CD4-positive, alpha-beta T cell (primary cell): ENCODE measurements at regions of chr17 and their contacts with region 1.

Region 1: DNA sequence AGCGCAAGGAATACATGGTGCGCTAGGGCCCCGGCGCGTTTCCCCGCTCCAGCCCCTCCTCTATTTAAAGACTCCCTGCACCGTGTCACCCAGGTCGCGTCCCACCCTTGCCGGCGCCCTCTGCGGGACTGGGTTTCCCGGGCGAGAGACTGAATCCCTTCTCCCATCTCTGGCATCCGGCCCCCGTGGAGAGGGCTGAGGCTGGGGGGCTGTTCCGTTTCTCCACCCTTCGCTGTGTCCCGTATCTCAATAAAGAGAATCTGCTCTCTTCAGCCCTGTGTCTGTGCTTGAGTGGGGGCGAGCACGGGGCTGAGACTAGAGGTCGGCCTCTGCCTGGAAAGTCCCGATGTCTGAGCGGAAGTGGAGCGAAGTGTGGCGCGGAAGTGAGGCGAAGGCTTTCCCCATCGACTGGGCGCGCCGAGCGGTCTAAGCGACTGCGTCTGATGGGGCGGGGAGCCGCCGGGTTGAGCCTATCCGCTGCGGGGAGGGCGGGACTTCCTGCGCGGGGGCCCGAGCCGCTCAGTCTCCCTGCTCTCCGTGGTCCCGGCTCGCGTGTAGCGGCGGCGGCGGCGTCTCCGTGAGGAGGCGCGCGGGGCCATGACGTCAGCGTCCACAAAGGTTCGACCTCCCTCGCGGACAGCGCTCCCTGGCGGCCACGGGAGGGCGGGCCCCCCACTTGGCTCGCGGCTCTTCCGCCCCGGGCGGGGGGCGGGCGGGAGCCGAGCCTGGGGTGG is 2.0 kb downstream of the RNASEK start:
- DNase-seq: peak; percentile 95 to 100 (median 97)
- ATAC-seq: peak; percentile 76
- H3K4me3 ChIP-seq: peak overlapping the region; percentile 99
- H3K4me3 Mint-ChIP-seq: peak overlapping the region; percentile 99
- H3K27ac ChIP-seq: peak overlapping the region; percentile 98 to 99
- H3K27ac Mint-ChIP-seq: peak overlapping the region; percentile 98
- H3K4me1 ChIP-seq: peaks cover 78% of the 10 kb centered on the region
- H3K4me1 Mint-ChIP-seq: peaks cover 68% of the 10 kb centered on the region
- H3K27me3 ChIP-seq: no peaks in the 10 kb centered on the region
- H3K27me3 Mint-ChIP-seq: no peaks in the 10 kb centered on the region
- CTCF ChIP-seq: peak; percentile 70

Region 2: DNA sequence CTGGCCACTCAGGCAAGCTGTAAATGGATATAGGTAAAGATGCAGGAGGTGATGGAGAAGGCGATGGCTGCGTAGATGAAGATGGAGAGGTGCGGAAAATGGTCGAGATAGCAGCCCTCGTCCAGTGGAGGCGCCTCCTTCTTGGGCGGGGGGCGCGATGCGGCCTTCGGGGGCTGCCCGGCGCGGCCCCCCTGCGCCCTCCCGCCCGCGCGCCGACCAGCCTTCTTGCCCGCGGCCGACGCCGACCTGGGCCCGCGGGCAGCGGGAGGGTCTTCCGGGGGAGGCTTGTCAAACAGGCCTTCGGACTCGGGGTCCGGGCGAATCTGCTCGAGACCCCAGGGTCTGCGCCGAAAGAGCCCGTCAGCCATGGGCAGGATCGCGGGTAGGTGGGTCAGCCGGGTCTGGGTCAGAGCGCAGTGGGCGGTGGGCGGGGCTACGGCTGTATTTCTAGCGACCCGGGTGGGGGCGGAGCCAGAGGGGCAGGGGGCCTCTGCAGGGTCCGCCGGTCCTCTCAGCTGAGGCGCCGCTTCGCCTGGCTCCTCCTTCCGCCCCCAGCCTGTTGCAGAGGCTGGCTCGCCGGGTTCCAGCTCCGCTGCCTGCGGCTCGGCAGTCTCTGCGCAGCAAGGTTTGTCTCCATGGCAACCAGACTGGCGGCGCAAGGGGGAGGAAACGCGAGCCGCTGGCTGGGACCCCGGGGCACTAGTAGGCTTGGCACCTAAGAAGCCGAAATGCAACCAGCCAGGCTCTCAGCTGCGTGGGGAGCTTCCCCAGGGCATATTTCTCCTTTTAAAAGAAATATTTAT is 1513.6 kb before region 1 on chr17:
- CTCF ChIA-PET with region 1: no interaction called
- POLR2A ChIA-PET with region 1: no interaction called
- intact Hi-C with region 1: loop called in 1 of 2 experiments (anchors 10 kb)
- DNase-seq: peak; percentile 60 to 91 (median 74)
- ATAC-seq: peak; percentile 95
- H3K4me3 ChIP-seq: peak overlapping the region; percentile 64
- H3K4me3 Mint-ChIP-seq: peak overlapping the region; percentile 93
- H3K27ac ChIP-seq: peak overlapping the region in 1 of 2 donors; percentile 14
- H3K27ac Mint-ChIP-seq: peak overlapping the region; percentile 83
- H3K4me1 ChIP-seq: peaks cover 17% of the 10 kb centered on the region
- H3K4me1 Mint-ChIP-seq: peaks cover 21% of the 10 kb centered on the region
- H3K27me3 ChIP-seq: no peaks in the 10 kb centered on the region
- H3K27me3 Mint-ChIP-seq: no peaks in the 10 kb centered on the region
- CTCF ChIP-seq: no peak

Region 3: DNA sequence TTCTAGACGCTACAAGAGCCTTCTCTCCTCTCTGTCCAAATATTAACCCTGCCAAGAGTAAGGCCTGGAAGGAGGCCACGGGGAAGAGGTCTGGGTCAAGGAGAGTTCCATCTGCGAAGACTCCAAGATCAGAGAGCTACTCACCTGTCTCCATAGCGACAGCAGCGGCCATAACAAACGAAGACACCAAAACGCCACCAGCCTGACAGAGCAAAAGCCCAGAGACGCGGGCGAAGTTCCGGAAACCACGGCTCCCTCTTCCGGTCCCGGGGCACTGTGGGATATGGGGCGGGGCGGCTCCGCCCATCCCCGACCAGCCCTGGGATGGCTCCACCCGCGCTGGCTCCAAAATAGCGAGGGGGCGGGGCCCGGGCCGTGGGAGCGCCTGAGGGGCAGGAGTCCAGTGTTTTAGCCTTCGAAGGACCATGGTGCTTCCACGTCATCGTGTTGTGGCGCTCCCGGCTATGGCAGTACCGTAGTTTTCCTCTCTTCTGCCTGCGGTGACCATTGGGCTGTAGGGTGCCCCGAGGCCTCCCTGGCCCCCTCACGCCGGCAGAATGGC is 363.0 kb before region 1 on chr17 and contains the starts of genes C17orf100 and MED31:
- CTCF ChIA-PET with region 1: no interaction called
- POLR2A ChIA-PET with region 1: no interaction called
- intact Hi-C with region 1: loop called (anchors 5 kb)
- DNase-seq: peak; percentile 87 to 98 (median 94)
- ATAC-seq: peak; percentile 81
- H3K4me3 ChIP-seq: peak within 1 kb of the TSS; percentile 64
- H3K4me3 Mint-ChIP-seq: peak within 1 kb of the TSS; percentile 99
- H3K27ac ChIP-seq: peak within 1 kb of the TSS; percentile 98
- H3K27ac Mint-ChIP-seq: peak within 1 kb of the TSS; percentile 99
- H3K4me1 ChIP-seq: peaks cover 35% of the 10 kb centered on the region
- H3K4me1 Mint-ChIP-seq: peaks cover 73% of the 10 kb centered on the region
- H3K27me3 ChIP-seq: peaks cover 0 to 4% of the 10 kb centered on the region in 2 experiments
- H3K27me3 Mint-ChIP-seq: no peaks in the 10 kb centered on the region
- CTCF ChIP-seq: no peak
- total RNA-seq, gene C17orf100: 0.69 to 0.70 TPM
- total RNA-seq, gene MED31: 31.4 to 32.0 TPM

Region 4: DNA sequence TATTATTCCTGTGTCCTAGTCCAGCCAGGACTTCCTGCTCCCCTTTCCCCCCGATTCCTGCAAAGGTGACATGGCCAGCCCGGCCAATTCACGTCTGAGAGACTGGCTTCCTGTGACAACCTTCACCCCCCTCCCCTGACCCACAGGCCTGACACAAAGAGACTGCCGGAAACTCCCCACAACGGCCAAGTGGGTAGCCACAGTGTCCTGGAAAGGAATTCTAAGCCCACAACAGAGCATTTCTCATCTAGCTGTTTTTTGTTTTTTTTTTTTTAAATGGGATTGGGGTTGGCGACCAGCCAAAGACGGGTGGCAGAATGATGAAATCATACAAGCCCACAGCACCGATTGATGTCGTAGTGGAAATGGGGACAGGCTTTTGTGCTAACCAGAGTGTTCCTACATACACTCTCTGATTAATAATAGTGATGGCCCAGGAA is 261.4 kb before region 1 on chr17:
- CTCF ChIA-PET with region 1: no interaction called
- POLR2A ChIA-PET with region 1: no interaction called
- intact Hi-C with region 1: loop called in 1 of 2 experiments (anchors 10 kb)
- DNase-seq: peak in 10 of 14 experiments; percentile 11 to 85 (median 52)
- ATAC-seq: peak; percentile 49
- H3K4me3 ChIP-seq: no peak overlapping the region
- H3K4me3 Mint-ChIP-seq: peak overlapping the region; percentile 47
- H3K27ac ChIP-seq: peak overlapping the region in 1 of 2 donors; percentile 64
- H3K27ac Mint-ChIP-seq: peak overlapping the region; percentile 80
- H3K4me1 ChIP-seq: peaks cover 52% of the 10 kb centered on the region
- H3K4me1 Mint-ChIP-seq: peaks cover 53% of the 10 kb centered on the region
- H3K27me3 ChIP-seq: no peaks in the 10 kb centered on the region
- H3K27me3 Mint-ChIP-seq: no peaks in the 10 kb centered on the region
- CTCF ChIP-seq: no peak

Region 5: DNA sequence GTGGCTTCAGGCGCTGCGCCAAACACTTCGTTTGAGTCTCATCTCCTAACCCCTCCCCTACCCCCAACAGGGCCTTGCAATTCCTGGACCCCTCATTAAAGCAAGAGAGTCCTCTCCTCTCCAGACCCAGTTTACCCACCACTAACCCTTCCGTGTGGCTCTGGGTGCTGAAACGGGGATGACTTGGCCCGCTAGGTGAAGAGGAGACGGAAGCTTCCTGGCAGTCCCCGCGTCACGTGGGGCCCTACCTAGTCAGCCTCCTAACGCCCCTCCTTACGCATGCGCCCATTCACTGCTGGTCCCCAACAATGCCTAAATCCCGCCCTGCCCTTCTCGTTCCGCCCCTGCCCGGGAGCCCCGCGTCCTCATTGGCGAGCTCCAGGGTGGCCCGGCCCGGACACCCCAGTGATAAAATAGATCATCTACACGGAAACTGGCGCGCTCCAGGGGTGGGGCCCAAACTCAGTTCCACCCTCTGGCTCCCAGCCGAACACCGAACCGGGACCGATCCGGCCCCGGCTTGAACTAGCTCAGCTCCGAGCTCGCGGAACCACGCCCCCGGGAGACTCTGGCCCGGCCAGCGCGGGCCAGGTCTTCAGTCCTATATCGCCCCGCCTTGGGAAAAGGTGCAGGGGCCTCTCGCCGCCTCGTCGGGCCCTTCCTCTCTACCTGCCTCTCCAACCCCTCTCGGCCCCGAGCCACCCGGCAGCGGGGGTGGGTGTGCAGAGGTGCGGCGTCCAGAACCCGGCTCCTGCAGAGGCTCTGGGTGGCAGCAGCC is 21.4 kb after region 1 on chr17 and contains the start of gene SLC16A13:
- CTCF ChIA-PET with region 1: interaction called, 3 read pairs
- POLR2A ChIA-PET with region 1: interaction called, 35 read pairs
- intact Hi-C with region 1: loop called in 1 of 2 experiments (anchors 2 kb)
- DNase-seq: peak; percentile 94 to 100 (median 98)
- ATAC-seq: peak; percentile 90
- H3K4me3 ChIP-seq: peak within 1 kb of the TSS; percentile 99
- H3K4me3 Mint-ChIP-seq: peak within 1 kb of the TSS; percentile 91
- H3K27ac ChIP-seq: peak within 1 kb of the TSS; percentile 84 to 93
- H3K27ac Mint-ChIP-seq: peak within 1 kb of the TSS; percentile 99
- H3K4me1 ChIP-seq: peaks cover 57% of the 10 kb centered on the region
- H3K4me1 Mint-ChIP-seq: peaks cover 63% of the 10 kb centered on the region
- H3K27me3 ChIP-seq: no peaks in the 10 kb centered on the region
- H3K27me3 Mint-ChIP-seq: no peaks in the 10 kb centered on the region
- CTCF ChIP-seq: no peak
- total RNA-seq, gene SLC16A13: 2.3 to 2.4 TPM

Region 6: GRCh38 chr17:8383143-8383822 is 1368.9 kb after region 1 on chr17 and contains the start of gene RPL26:
- CTCF ChIA-PET with region 1: no interaction called
- POLR2A ChIA-PET with region 1: no interaction called
- intact Hi-C with region 1: loop called in 1 of 2 experiments (anchors 10 kb)
- DNase-seq: peak; percentile 89 to 98 (median 93)
- ATAC-seq: peak; percentile 86
- H3K4me3 ChIP-seq: peak within 1 kb of the TSS; percentile 95
- H3K4me3 Mint-ChIP-seq: peak within 1 kb of the TSS; percentile 95
- H3K27ac ChIP-seq: peak within 1 kb of the TSS; percentile 72 to 76
- H3K27ac Mint-ChIP-seq: peak within 1 kb of the TSS; percentile 91
- H3K4me1 ChIP-seq: peaks cover 47% of the 10 kb centered on the region
- H3K4me1 Mint-ChIP-seq: peaks cover 64% of the 10 kb centered on the region
- H3K27me3 ChIP-seq: no peaks in the 10 kb centered on the region
- H3K27me3 Mint-ChIP-seq: no peaks in the 10 kb centered on the region
- CTCF ChIP-seq: peak; percentile 100
- total RNA-seq, gene RPL26: 2,959 to 3,104 TPM

Region 7: DNA sequence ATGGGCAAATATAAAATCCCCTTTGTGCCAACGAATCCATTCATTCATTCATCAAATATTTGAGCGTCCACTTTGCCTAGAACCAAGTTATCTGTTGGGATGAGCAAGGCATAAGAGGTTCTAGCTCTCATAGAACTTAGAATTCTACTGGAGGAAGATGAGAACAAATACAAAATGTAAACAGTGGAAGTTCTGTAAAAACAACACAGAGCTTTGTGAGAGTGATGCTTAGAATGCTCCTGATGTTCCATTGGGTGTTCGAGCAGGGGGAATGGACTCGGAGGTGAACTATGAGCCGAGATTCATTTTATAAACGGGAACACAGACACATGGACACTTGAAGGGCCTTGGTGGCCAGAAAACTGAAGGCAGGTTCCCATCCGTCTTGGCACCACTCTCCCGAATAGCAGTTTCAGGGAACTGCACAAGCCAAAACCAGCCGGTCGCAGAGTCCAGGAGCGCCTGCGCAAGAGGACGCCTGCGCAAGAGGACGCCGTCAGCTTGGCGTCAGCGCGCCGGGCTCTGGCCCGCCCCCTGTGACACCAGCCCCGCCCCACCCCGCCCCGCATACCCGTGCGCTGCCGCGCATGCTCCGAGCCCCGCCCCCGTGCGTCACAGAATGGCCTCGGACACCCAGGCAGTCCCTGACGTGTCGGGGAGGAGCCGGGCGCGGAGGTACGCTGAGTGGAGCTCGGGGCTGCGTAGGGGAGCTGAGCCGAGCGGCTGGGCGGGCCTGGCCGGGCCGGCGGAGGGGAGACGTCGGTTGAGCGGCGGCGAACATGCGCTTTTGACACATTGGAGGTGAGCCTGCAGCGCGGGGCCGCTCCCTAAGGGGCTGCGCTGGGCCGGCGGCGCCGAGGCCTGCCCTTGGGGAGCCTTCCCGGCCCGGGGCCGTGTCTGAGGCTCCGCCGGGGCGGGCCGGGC is 1421.1 kb after region 1 on chr17 and contains the start of gene NDEL1:
- CTCF ChIA-PET with region 1: no interaction called
- POLR2A ChIA-PET with region 1: no interaction called
- intact Hi-C with region 1: loop called in 1 of 2 experiments (anchors 10 kb)
- DNase-seq: peak; percentile 98 to 99 (median 99)
- ATAC-seq: peak; percentile 91
- H3K4me3 ChIP-seq: peak within 1 kb of the TSS; percentile 78
- H3K4me3 Mint-ChIP-seq: peak within 1 kb of the TSS; percentile 95
- H3K27ac ChIP-seq: peak within 1 kb of the TSS; percentile 97 to 98
- H3K27ac Mint-ChIP-seq: peak within 1 kb of the TSS; percentile 98
- H3K4me1 ChIP-seq: peaks cover 25% of the 10 kb centered on the region
- H3K4me1 Mint-ChIP-seq: peaks cover 44% of the 10 kb centered on the region
- H3K27me3 ChIP-seq: no peaks in the 10 kb centered on the region
- H3K27me3 Mint-ChIP-seq: no peaks in the 10 kb centered on the region
- CTCF ChIP-seq: no peak
- total RNA-seq, gene NDEL1: 300 to 313 TPM